CD8-positive, alpha-beta T cell (primary cell): ENCODE measurements at regions of chr1 and their contacts with region 1.

Region 1: GRCh38 chr1:97623220-97623619 is 297.6 kb downstream of the DPYD start:
- DNase-seq: no peak
- ATAC-seq: no peak
- H3K4me3 ChIP-seq: no peak overlapping the region
- H3K4me3 Mint-ChIP-seq: no peak overlapping the region
- H3K27ac ChIP-seq: no peak overlapping the region
- H3K27ac Mint-ChIP-seq: no peak overlapping the region
- H3K4me1 ChIP-seq: no peaks in the 10 kb centered on the region
- H3K4me1 Mint-ChIP-seq: peaks cover 6% of the 10 kb centered on the region
- H3K27me3 ChIP-seq: no peaks in the 10 kb centered on the region
- H3K27me3 Mint-ChIP-seq: no peaks in the 10 kb centered on the region
- CTCF ChIP-seq: no peak

Region 2: GRCh38 chr1:97634758-97635157 is 11.5 kb after region 1 on chr1:
- CTCF ChIA-PET with region 1: no interaction called
- POLR2A ChIA-PET with region 1: no interaction called
- intact Hi-C with region 1: loop called in 1 of 2 experiments (anchors 1 kb)
- DNase-seq: no peak
- ATAC-seq: no peak
- H3K4me3 ChIP-seq: no peak overlapping the region
- H3K4me3 Mint-ChIP-seq: no peak overlapping the region
- H3K27ac ChIP-seq: no peak overlapping the region
- H3K27ac Mint-ChIP-seq: no peak overlapping the region
- H3K4me1 ChIP-seq: no peaks in the 10 kb centered on the region
- H3K4me1 Mint-ChIP-seq: peaks cover 12% of the 10 kb centered on the region
- H3K27me3 ChIP-seq: no peaks in the 10 kb centered on the region
- H3K27me3 Mint-ChIP-seq: no peaks in the 10 kb centered on the region
- CTCF ChIP-seq: no peak

Region 3: DNA sequence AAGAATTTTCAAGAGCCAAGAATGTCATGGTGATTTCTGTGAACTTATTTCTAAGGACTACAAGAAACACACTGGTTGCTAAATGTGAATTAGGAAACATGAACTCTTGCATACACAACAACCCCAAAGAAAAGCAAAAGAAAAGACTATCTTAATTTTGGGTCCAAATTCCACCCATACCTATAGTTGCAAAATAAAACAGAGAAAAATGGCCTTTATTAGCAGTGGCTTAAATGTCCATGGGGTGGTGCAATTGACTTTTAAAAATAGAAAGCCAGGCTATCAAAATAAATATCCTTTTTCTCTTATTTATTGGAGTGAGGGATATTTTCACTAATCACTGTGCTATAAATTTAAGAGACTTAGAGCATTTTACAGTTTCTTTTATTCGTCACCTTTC is 378.5 kb after region 1 on chr1:
- CTCF ChIA-PET with region 1: no interaction called
- POLR2A ChIA-PET with region 1: no interaction called
- intact Hi-C with region 1: no loop called
- DNase-seq: no peak
- ATAC-seq: no peak
- H3K4me3 ChIP-seq: no peak overlapping the region
- H3K4me3 Mint-ChIP-seq: no peak overlapping the region
- H3K27ac ChIP-seq: no peak overlapping the region
- H3K27ac Mint-ChIP-seq: no peak overlapping the region
- H3K4me1 ChIP-seq: no peaks in the 10 kb centered on the region
- H3K4me1 Mint-ChIP-seq: no peaks in the 10 kb centered on the region
- H3K27me3 ChIP-seq: no peaks in the 10 kb centered on the region
- H3K27me3 Mint-ChIP-seq: no peaks in the 10 kb centered on the region
- CTCF ChIP-seq: no peak